Activated CD4-positive, alpha-beta T cell treated with anti-CD3 and anti-CD28 coated beads for 36 hours (primary cell): ENCODE measurements at regions of chr7 and their contacts with region 1.

Region 1: GRCh38 chr7:150737265-150738055 is at the start of gene GIMAP5:
- DNase-seq: peak; percentile 75
- ATAC-seq: peak; percentile 68
- H3K4me3 Mint-ChIP-seq: peak within 1 kb of the TSS; percentile 86
- H3K27ac Mint-ChIP-seq: peak within 1 kb of the TSS; percentile 98
- H3K4me1 Mint-ChIP-seq: peaks cover 74% of the 10 kb centered on the region
- H3K27me3 Mint-ChIP-seq: no peaks in the 10 kb centered on the region
- total RNA-seq, gene GIMAP5: 47.6 to 53.3 TPM

Region 2: DNA sequence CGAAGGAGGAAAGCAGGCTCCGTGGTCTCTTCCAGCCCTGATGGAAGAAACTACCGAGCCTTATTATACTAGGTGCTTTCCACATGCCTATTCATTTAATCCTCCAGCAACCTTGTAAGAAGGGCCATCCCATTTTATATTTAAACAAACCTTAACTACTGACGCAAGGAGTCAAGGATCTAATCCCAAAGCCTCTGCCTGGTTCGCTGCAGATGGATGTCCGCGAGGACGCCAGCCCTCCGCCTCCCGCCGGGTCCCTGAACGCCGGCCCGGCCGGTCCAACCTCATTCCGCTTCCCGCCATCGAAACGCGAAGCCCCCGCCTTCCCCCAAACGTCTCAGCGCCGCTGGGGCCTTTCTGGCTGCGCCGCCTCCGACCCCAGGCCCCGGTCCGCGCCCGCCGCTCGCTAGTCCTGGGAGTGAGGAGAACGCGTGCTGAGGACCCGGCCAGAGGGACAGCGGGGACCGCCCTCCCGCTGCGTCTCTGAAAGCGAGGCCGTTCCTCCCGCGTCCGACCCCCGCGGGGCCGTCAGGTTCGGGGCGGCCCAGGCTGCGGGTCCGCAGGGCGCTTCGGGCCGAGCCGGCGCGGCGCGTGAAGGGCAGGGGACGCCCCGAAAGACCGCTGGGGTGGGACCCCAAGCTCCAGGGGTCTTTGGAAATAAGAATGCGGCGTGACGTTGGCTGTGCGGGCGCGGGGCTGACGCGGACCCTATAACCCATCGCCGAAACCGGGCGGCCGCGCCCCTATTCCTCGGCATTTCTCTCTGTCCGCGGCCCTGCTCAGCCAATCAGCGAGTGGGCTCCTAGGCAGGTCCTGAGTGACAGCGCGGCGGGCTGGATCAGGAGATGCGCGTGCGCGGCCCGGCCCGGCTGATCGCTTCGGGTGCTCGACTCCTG is 864.1 kb before region 1 on chr7 and contains the start of gene ATP6V0E2:
- CTCF ChIA-PET with region 1: no interaction called
- POLR2A ChIA-PET with region 1: no interaction called
- intact Hi-C with region 1: loop called in 1 of 2 experiments (anchors 5 kb)
- DNase-seq: peak; percentile 96
- ATAC-seq: peak; percentile 84
- H3K4me3 Mint-ChIP-seq: peak within 1 kb of the TSS; percentile 82
- H3K27ac Mint-ChIP-seq: peak within 1 kb of the TSS; percentile 91
- H3K4me1 Mint-ChIP-seq: peaks cover 74% of the 10 kb centered on the region
- H3K27me3 Mint-ChIP-seq: no peaks in the 10 kb centered on the region
- total RNA-seq, gene ATP6V0E2: 33.9 to 41.3 TPM

Region 3: DNA sequence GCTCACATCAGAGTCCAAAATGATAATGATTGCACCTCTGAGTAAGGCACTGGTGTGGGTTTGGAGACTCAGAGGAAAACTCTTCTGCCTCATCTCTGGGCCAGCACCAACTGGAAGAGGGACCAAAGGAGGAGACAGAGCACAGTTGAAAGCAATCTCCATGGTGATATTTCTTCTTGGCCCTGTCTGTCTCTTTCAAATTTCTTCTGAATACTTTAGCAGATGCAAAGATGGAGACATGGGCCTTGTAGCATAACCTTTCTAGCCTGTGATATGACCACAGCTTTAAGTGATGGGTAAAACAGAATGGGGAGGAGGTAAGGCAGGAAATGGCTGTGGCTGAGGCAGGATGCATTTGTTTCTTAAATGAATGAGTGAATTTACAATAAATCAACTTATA is 234.9 kb before region 1 on chr7:
- CTCF ChIA-PET with region 1: interaction called, 3 read pairs
- POLR2A ChIA-PET with region 1: no interaction called
- intact Hi-C with region 1: loop called in 1 of 2 experiments (anchors 5 kb)
- DNase-seq: peak; percentile 56
- ATAC-seq: peak; percentile 74
- H3K4me3 Mint-ChIP-seq: peak overlapping the region; percentile 17
- H3K27ac Mint-ChIP-seq: peak overlapping the region; percentile 98
- H3K4me1 Mint-ChIP-seq: peaks cover 72% of the 10 kb centered on the region
- H3K27me3 Mint-ChIP-seq: no peaks in the 10 kb centered on the region

Region 4: DNA sequence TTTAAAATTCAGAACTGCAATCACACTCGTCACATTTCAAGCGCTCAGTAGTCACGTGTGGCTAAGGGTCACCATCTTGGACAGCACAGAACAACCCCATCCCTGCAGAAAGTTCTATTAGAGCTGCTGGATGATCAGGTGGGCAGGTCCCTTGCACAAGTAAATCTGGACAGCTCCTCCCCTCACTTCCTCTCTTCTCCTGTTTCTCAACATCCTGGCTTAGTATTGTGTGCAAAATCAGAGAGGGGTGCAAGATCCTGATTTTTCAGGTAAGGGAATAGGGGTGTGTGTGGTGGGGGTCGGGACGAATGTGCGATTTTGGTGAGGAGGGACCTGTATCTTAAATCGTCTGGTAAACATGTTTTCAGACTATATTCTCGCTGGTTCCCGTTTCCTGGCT is 170.3 kb before region 1 on chr7 and contains the start of gene GIMAP4:
- CTCF ChIA-PET with region 1: interaction called, 3 read pairs
- POLR2A ChIA-PET with region 1: no interaction called
- intact Hi-C with region 1: loop called in 1 of 2 experiments (anchors 5 kb)
- DNase-seq: peak; percentile 45
- ATAC-seq: peak; percentile 50
- H3K4me3 Mint-ChIP-seq: peak within 1 kb of the TSS; percentile 89
- H3K27ac Mint-ChIP-seq: peak within 1 kb of the TSS; percentile 99
- H3K4me1 Mint-ChIP-seq: peaks cover 67% of the 10 kb centered on the region
- H3K27me3 Mint-ChIP-seq: no peaks in the 10 kb centered on the region
- total RNA-seq, gene GIMAP4: 109 to 135 TPM

Region 5: GRCh38 chr7:150668472-150668911 is 69.0 kb before region 1 on chr7:
- CTCF ChIA-PET with region 1: no interaction called
- POLR2A ChIA-PET with region 1: no interaction called
- intact Hi-C with region 1: loop called (anchors 1 to 2 kb)
- DNase-seq: peak; percentile 77
- ATAC-seq: peak; percentile 76
- H3K4me3 Mint-ChIP-seq: peak overlapping the region; percentile 28
- H3K27ac Mint-ChIP-seq: peak overlapping the region; percentile 94
- H3K4me1 Mint-ChIP-seq: peaks cover 89% of the 10 kb centered on the region
- H3K27me3 Mint-ChIP-seq: no peaks in the 10 kb centered on the region

Region 6: DNA sequence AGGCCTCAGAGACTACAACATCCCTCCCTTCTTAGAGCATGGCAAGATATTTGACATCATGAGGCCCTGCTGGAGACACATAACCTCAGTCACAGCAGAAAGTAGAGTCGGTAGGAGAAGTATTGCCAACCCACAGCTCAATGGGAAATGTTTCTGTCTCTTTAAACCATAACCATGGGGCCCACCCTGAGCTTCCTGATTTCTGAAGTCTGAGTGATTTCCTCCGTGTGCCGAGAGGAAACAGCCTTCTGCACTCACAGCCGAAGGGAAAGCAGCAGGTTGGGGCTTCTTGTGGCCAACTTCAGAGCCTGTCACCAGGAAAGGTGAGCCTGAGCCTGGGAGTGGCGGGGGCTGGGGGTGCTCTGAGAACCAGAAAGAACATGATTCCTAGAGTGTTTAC is 21.1 kb before region 1 on chr7 and contains the start of gene GIMAP1:
- CTCF ChIA-PET with region 1: interaction called, 51 read pairs
- POLR2A ChIA-PET with region 1: interaction called, 4 read pairs
- intact Hi-C with region 1: loop called (anchors 1 to 2 kb)
- DNase-seq: peak; percentile 72
- ATAC-seq: peak; percentile 75
- H3K4me3 Mint-ChIP-seq: peak within 1 kb of the TSS; percentile 95
- H3K27ac Mint-ChIP-seq: peak within 1 kb of the TSS; percentile 99
- H3K4me1 Mint-ChIP-seq: peaks cover 50% of the 10 kb centered on the region
- H3K27me3 Mint-ChIP-seq: no peaks in the 10 kb centered on the region
- total RNA-seq, gene GIMAP1: 3.5 to 5.5 TPM

Region 7: DNA sequence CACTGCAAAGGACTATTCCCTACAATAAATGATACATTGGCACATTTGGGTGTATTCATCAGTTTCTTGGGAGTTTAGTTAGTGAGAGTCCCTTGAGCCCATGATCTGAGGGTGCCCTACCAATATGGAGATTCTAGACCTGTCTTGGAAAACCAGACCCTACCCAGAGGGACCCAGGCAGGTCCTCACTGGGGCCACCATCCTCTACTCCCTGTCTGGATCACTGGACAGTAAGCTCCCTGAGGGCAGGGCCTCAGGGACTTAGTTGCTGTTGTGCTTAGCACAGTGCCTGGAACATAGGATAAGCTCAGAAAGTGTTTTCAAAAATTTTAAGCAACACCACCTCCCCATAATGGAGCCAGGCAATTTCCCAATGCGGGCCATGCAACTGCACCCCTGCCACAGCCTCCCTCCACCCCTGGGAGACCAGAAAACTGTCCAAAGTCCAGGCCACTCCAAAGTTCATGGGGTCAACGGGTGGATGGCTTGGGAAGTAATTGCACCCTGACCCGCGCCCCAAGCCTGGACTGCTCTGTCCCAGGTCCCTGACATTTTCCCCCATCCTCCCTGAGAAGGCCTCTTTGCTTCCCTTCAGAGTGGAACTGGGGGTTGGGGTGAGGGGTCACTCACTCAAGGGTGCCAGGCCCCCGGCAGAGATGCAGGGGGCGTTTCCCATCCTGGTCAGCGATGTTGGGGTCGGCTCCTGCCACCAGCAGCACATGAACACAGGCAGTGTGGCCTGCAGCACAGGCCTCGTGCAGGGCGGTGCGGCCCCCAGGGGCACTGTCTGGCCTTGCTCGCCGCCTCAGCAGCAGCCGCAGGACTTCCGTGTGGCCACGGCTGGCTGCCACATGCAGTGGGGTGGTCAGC is 448.5 kb after region 1 on chr7:
- CTCF ChIA-PET with region 1: no interaction called
- POLR2A ChIA-PET with region 1: no interaction called
- intact Hi-C with region 1: no loop called
- DNase-seq: no peak
- ATAC-seq: no peak
- H3K4me3 Mint-ChIP-seq: no peak overlapping the region
- H3K27ac Mint-ChIP-seq: no peak overlapping the region
- H3K4me1 Mint-ChIP-seq: no peaks in the 10 kb centered on the region
- H3K27me3 Mint-ChIP-seq: no peaks in the 10 kb centered on the region

Region 8: DNA sequence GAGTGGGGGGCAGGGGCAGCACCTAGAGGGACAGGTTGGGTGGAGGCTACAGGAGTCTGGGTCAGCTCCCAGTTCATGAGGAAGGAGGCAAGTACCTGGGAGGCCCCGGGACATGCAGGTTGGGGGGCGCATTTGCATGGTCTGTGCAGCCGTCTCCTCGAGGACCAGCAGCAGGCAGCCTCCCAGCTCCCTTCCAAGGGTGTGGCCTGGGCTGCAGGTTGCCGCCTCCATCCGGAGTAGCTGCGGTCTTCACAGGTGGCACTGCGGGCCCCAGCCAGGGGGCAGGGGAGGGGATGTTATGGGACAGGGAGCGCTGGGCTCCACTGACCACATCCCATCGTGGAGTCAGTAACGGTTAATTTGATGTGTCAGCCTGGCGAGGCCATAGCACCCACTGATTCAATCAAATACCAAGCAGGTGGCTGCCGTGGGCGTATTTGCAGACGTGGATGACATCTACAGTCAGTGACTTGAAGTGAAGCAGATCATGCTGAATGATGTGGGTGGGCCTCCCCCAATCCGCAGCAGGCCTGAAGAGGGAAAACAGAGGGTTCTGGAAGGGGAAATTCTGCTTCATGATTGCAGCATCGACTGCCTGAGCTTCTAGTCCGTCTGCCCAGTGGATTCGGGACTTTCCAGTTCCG is 1057.8 kb after region 1 on chr7:
- CTCF ChIA-PET with region 1: no interaction called
- POLR2A ChIA-PET with region 1: no interaction called
- intact Hi-C with region 1: no loop called
- DNase-seq: peak; percentile 94
- ATAC-seq: peak; percentile 93
- H3K4me3 Mint-ChIP-seq: no peak overlapping the region
- H3K27ac Mint-ChIP-seq: peak overlapping the region; percentile 67
- H3K4me1 Mint-ChIP-seq: peaks cover 33% of the 10 kb centered on the region
- H3K27me3 Mint-ChIP-seq: no peaks in the 10 kb centered on the region